CD4-positive, alpha-beta T cell (primary cell): ENCODE measurements at regions of chr9 and their contacts with region 1.

Region 1: DNA sequence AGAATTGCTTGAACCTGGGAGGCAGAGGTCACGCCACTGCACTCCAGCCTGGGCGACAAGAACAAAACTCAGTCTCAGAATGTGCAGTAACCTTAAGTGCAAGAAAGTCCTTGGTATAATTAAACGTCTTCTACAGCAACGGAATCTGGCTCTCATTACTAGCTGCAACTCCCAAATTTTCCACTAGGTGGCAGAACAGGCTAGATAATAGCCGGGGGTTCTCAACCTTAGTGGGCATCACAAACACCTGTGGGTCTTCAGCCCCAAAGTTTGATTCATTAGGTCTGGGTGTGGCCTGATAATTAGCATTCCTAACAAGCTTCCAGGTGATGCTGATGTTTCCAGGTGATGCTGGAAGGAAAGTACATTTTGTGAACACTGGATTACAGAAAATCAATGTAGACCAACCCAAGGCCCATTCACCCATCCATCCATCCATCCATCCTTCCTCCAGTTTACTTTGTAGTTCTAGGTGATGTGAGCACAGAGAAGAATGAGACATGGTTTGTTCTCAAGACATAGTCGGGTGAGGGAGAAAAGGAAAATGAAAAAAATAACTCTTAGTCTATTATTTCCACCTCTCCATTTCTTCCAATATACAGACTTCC is 37.3 kb downstream of the FBXW2 start:
- DNase-seq: peak; percentile 33 to 83 (median 60)
- ATAC-seq: peak; percentile 67
- H3K4me3 ChIP-seq: no peak overlapping the region
- H3K4me3 Mint-ChIP-seq: no peak overlapping the region
- H3K27ac ChIP-seq: no peak overlapping the region
- H3K27ac Mint-ChIP-seq: peak overlapping the region; percentile 57
- H3K4me1 ChIP-seq: no peaks in the 10 kb centered on the region
- H3K4me1 Mint-ChIP-seq: peaks cover 18% of the 10 kb centered on the region
- H3K27me3 ChIP-seq: no peaks in the 10 kb centered on the region
- H3K27me3 Mint-ChIP-seq: no peaks in the 10 kb centered on the region
- CTCF ChIP-seq: peak; percentile 96

Region 2: DNA sequence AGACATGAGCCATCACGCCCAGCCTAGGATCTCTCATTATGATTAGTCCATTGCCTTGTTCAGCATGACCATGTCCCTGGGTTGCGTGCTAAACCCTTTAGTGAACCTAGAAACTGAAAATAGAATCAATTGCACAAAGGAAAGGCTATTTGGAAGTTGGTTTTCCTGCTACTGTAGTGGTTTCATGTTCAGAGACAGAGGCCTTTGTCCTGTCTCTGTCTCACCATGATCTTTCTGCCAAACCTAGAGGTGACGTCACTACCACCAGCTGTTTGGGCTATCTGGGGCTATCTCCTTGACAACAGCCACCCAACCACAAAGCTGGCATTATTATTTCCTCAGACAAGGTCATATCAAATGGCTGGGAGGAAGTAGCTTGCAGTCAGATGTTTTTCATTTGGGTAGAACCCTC is 172.0 kb before region 1 on chr9:
- CTCF ChIA-PET with region 1: no interaction called
- POLR2A ChIA-PET with region 1: no interaction called
- intact Hi-C with region 1: no loop called
- DNase-seq: peak in 8 of 14 experiments; percentile 5 to 79 (median 18)
- ATAC-seq: no peak
- H3K4me3 ChIP-seq: no peak overlapping the region
- H3K4me3 Mint-ChIP-seq: peak overlapping the region; percentile 42
- H3K27ac ChIP-seq: no peak overlapping the region
- H3K27ac Mint-ChIP-seq: peak overlapping the region; percentile 42
- H3K4me1 ChIP-seq: peaks cover 23% of the 10 kb centered on the region
- H3K4me1 Mint-ChIP-seq: peaks cover 19% of the 10 kb centered on the region
- H3K27me3 ChIP-seq: no peaks in the 10 kb centered on the region
- H3K27me3 Mint-ChIP-seq: no peaks in the 10 kb centered on the region
- CTCF ChIP-seq: no peak

Region 3: DNA sequence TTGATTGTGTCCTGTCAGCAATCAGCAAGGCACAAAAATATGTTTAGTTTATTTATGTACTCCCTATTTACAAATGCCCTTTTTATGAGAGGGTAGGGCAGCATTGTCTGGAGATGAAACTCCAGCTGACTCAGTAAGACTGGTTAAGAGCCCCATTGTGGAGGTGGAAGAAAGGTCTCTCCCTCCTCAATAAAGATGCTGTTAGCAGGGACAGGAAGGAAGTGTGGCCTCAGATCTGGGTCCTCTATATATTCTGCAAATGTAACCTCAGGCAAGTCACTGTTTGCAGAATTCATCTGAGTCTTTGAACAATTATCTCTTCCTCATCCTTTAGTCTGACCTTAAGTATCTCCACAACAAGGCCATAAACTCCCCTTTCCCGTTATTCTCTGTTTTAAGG is 219.0 kb after region 1 on chr9:
- CTCF ChIA-PET with region 1: no interaction called
- POLR2A ChIA-PET with region 1: no interaction called
- intact Hi-C with region 1: loop called in 1 of 2 experiments (anchors 5 kb)
- DNase-seq: peak in 4 of 14 experiments; percentile 13 to 36 (median 22)
- ATAC-seq: peak; percentile 56
- H3K4me3 ChIP-seq: no peak overlapping the region
- H3K4me3 Mint-ChIP-seq: no peak overlapping the region
- H3K27ac ChIP-seq: peak overlapping the region; percentile 30 to 36
- H3K27ac Mint-ChIP-seq: peak overlapping the region; percentile 44
- H3K4me1 ChIP-seq: peaks cover 16% of the 10 kb centered on the region
- H3K4me1 Mint-ChIP-seq: peaks cover 17% of the 10 kb centered on the region
- H3K27me3 ChIP-seq: no peaks in the 10 kb centered on the region
- H3K27me3 Mint-ChIP-seq: no peaks in the 10 kb centered on the region
- CTCF ChIP-seq: no peak

Region 4: GRCh38 chr9:121074635-121075385 is 318.9 kb after region 1 on chr9 and contains the start of gene CNTRL:
- CTCF ChIA-PET with region 1: interaction called, 3 read pairs
- POLR2A ChIA-PET with region 1: interaction called, 3 read pairs
- intact Hi-C with region 1: loop called in 1 of 2 experiments (anchors 1 kb)
- DNase-seq: peak; percentile 54 to 93 (median 78)
- ATAC-seq: peak; percentile 81
- H3K4me3 ChIP-seq: peak within 1 kb of the TSS; percentile 92
- H3K4me3 Mint-ChIP-seq: peak within 1 kb of the TSS; percentile 89
- H3K27ac ChIP-seq: peak within 1 kb of the TSS; percentile 75 to 81
- H3K27ac Mint-ChIP-seq: peak within 1 kb of the TSS; percentile 98
- H3K4me1 ChIP-seq: peaks cover 30% of the 10 kb centered on the region
- H3K4me1 Mint-ChIP-seq: peaks cover 54% of the 10 kb centered on the region
- H3K27me3 ChIP-seq: no peaks in the 10 kb centered on the region
- H3K27me3 Mint-ChIP-seq: no peaks in the 10 kb centered on the region
- CTCF ChIP-seq: no peak
- total RNA-seq, gene CNTRL: 35.1 to 38.1 TPM

Region 5: GRCh38 chr9:121399883-121400607 is 644.1 kb after region 1 on chr9:
- CTCF ChIA-PET with region 1: no interaction called
- POLR2A ChIA-PET with region 1: no interaction called
- intact Hi-C with region 1: loop called (anchors 1 to 2 kb)
- DNase-seq: peak in 3 of 14 experiments; percentile 68 to 81 (median 76)
- ATAC-seq: no peak
- H3K4me3 ChIP-seq: no peak overlapping the region
- H3K4me3 Mint-ChIP-seq: no peak overlapping the region
- H3K27ac ChIP-seq: no peak overlapping the region
- H3K27ac Mint-ChIP-seq: no peak overlapping the region
- H3K4me1 ChIP-seq: no peaks in the 10 kb centered on the region
- H3K4me1 Mint-ChIP-seq: no peaks in the 10 kb centered on the region
- H3K27me3 ChIP-seq: no peaks in the 10 kb centered on the region
- H3K27me3 Mint-ChIP-seq: peaks cover 5% of the 10 kb centered on the region
- CTCF ChIP-seq: peak; percentile 83